Ascending aorta (tissue), 2 donors: ENCODE measurements at regions of chr5 and their contacts with region 1.

Region 1: DNA sequence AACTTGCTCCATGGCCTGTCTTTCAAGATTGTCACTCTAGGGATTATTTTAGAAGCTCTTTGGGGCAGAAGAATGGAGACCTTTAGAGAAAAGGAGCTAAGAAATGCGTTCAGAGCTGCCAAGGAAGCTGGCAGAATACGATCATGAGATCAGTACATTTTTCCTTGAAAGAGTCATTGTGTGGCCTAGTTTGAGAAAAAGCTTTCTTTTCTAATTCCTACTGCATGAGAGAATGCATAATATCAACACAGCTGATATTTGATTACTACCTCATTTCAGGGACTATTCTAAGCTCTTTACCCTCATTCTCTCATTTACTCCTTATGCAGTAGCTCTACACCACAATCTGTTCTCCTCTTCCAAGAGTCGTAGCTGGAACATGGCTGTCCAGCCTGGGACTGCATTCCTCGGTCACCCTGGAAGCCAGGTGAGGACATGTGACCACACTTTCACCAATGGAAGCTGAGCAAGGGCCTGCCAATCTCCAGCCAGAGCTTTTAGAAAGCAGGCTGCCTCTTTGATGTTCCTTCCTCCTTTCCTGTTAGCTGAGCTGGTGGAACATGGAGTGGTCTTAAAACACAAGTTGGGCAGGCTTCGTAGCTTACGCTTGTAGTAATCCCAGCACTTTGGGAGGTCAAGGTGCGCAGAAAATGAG is 99.3 kb upstream of the LHFPL2 start:
- DNase-seq: peak in 1 of 2 donors; percentile 68
- H3K4me3 ChIP-seq: no peak overlapping the region
- H3K27ac ChIP-seq: peak overlapping the region; percentile 79 to 92
- H3K4me1 ChIP-seq: peaks cover 10 to 24% of the 10 kb centered on the region in 2 donors
- H3K27me3 ChIP-seq: no peaks in the 10 kb centered on the region
- CTCF ChIP-seq: no peak

Region 2: DNA sequence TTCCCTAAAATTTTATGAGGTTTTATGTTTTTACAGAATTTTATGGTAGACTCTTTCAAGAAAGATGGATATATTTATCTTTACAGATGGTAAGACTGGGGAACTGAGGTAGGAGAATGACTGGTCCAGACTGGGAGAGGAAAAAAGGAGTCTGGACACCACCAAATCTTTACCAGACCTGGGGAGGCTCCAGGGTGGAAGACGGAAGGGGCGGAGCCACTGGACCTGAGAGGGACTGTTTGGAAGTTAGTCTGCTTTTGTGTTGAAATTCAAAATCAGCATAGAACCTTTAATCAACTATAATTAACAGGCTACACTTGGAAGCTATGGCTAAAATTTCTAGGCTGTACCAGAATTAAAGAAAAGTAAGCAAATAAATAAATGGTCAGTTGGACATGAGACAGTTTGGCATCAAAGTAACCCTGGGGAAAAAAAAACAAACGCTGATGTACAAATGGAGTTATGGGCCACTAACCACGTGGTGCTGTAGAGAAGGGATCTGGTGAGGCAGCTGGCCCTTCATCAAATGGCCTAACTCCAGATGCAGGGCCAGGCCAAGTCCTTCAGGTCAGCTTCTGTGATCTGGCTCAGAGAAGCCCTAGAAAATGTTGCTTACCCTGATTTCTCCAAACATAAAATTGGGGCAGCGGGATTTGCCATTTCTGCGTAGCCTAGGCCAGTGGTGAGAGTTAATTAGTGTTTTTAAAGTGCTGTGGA is 82.1 kb after region 1 on chr5:
- intact Hi-C with region 1: loop called (anchors 5 kb)
- DNase-seq: peak in 1 of 2 donors; percentile 80
- H3K4me3 ChIP-seq: no peak overlapping the region
- H3K27ac ChIP-seq: peak overlapping the region; percentile 54 to 57
- H3K4me1 ChIP-seq: peaks cover 0 to 14% of the 10 kb centered on the region in 2 donors
- H3K27me3 ChIP-seq: no peaks in the 10 kb centered on the region
- CTCF ChIP-seq: no peak

Region 3: DNA sequence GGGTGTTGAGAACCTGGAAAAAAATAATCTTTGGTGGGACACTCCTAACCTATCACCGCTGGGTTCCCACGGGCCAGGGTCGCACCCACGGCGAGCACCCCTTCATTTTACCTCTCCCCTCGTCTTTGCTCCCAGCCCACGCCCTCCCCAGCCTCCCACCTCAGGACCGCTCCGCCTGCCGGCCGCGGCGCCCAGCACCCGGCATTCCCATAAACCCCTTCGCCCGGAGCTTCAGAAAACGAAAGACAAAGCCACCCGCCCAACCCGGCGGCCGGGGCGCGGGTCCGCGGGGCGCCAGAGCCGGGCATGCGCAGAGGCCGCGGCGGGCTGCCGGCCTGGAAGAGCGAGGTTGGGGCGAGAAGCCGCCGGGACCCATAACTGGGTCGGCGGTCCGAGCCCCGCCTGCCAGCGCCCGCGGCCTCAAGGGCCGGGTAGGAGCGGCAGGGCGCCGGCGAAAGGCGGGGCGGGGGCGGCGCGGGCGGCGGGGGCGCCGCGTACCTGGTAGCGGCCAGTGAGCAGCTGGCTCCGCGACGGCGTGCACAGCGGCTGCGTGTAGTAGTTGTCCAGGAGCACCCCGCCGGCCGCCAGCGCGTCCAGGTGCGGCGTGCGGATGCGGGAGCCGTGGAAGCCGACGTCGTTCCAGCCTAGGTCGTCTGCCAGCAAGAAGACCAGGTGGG is 236.7 kb after region 1 on chr5:
- intact Hi-C with region 1: loop called (anchors 5 kb)
- DNase-seq: peak; percentile 52 to 92
- H3K4me3 ChIP-seq: peak overlapping the region; percentile 89 to 95
- H3K27ac ChIP-seq: peak overlapping the region; percentile 96
- H3K4me1 ChIP-seq: peaks cover 0 to 12% of the 10 kb centered on the region in 2 donors
- H3K27me3 ChIP-seq: no peaks in the 10 kb centered on the region
- CTCF ChIP-seq: peak; percentile 28 to 48 (median 40)